ENCODE measurements at regions of chr9 and their contacts with region 1.

Region 1: GRCh38 chr9:371349-371748 is 156.7 kb downstream of the DOCK8 start:
- DNase-seq: no peak
- H3K4me3 ChIP-seq: no peak overlapping the region
- H3K4me3 Mint-ChIP-seq: no peak overlapping the region
- H3K27ac ChIP-seq: no peak overlapping the region
- H3K27ac Mint-ChIP-seq: peak overlapping the region in 1 of 7 donors; percentile 27
- H3K4me1 ChIP-seq: no peaks in the 10 kb centered on the region
- H3K4me1 Mint-ChIP-seq: no peaks in the 10 kb centered on the region
- H3K27me3 ChIP-seq: no peaks in the 10 kb centered on the region
- H3K27me3 Mint-ChIP-seq: no peaks in the 10 kb centered on the region
- CTCF ChIP-seq: no peak

Region 2: GRCh38 chr9:292914-293313 is 78.4 kb before region 1 on chr9:
- intact Hi-C with region 1: no loop called
- DNase-seq: no peak
- H3K4me3 ChIP-seq: no peak overlapping the region
- H3K4me3 Mint-ChIP-seq: no peak overlapping the region
- H3K27ac ChIP-seq: peak overlapping the region in 1 of 2 donors; percentile 34
- H3K27ac Mint-ChIP-seq: peak overlapping the region in 6 of 7 donors; percentile 2 to 75 (median 26)
- H3K4me1 ChIP-seq: peaks cover 30 to 35% of the 10 kb centered on the region in 2 donors
- H3K4me1 Mint-ChIP-seq: peaks cover 28% of the 10 kb centered on the region
- H3K27me3 ChIP-seq: no peaks in the 10 kb centered on the region
- H3K27me3 Mint-ChIP-seq: no peaks in the 10 kb centered on the region
- CTCF ChIP-seq: peak; percentile 19

Region 3: GRCh38 chr9:336039-336438 is 35.3 kb before region 1 on chr9:
- intact Hi-C with region 1: loop called in 1 of 2 experiments (anchors 5 kb)
- DNase-seq: no peak
- H3K4me3 ChIP-seq: no peak overlapping the region
- H3K4me3 Mint-ChIP-seq: no peak overlapping the region
- H3K27ac ChIP-seq: peak overlapping the region in 1 of 2 donors; percentile 27
- H3K27ac Mint-ChIP-seq: peak overlapping the region in 1 of 7 donors; percentile 37
- H3K4me1 ChIP-seq: no peaks in the 10 kb centered on the region
- H3K4me1 Mint-ChIP-seq: no peaks in the 10 kb centered on the region
- H3K27me3 ChIP-seq: no peaks in the 10 kb centered on the region
- H3K27me3 Mint-ChIP-seq: no peaks in the 10 kb centered on the region
- CTCF ChIP-seq: no peak

Region 4: GRCh38 chr9:419571-420402 is 48.4 kb after region 1 on chr9:
- intact Hi-C with region 1: loop called in 1 of 2 experiments (anchors 10 kb)
- DNase-seq: no peak
- H3K4me3 ChIP-seq: no peak overlapping the region
- H3K4me3 Mint-ChIP-seq: no peak overlapping the region
- H3K27ac ChIP-seq: no peak overlapping the region
- H3K27ac Mint-ChIP-seq: peak overlapping the region in 1 of 7 donors; percentile 23
- H3K4me1 ChIP-seq: no peaks in the 10 kb centered on the region
- H3K4me1 Mint-ChIP-seq: no peaks in the 10 kb centered on the region
- H3K27me3 ChIP-seq: no peaks in the 10 kb centered on the region
- H3K27me3 Mint-ChIP-seq: no peaks in the 10 kb centered on the region
- CTCF ChIP-seq: no peak